ENCODE measurements at regions of chr20 and their contacts with region 1.

Region 1: GRCh38 chr20:45318948-45319347 is 10.8 kb upstream of the MATN4 start:
- DNase-seq: no peak
- ATAC-seq: no peak
- H3K4me3 ChIP-seq: no peak overlapping the region
- H3K4me3 Mint-ChIP-seq: no peak overlapping the region
- H3K27ac ChIP-seq: no peak overlapping the region
- H3K27ac Mint-ChIP-seq: no peak overlapping the region
- H3K4me1 ChIP-seq: peaks cover 23% of the 10 kb centered on the region
- H3K4me1 Mint-ChIP-seq: peaks cover 0 to 6% of the 10 kb centered on the region in 2 donors
- H3K27me3 ChIP-seq: no peaks in the 10 kb centered on the region
- H3K27me3 Mint-ChIP-seq: peaks cover 29 to 33% of the 10 kb centered on the region in 2 donors
- CTCF ChIP-seq: no peak

Region 2: GRCh38 chr20:45450097-45450818 is 131.3 kb after region 1 on chr20:
- intact Hi-C with region 1: loop called (anchors 1 kb)
- DNase-seq: peak in 1 of 2 donors; percentile 71
- ATAC-seq: peak; percentile 53 to 66 (median 60)
- H3K4me3 ChIP-seq: no peak overlapping the region
- H3K4me3 Mint-ChIP-seq: no peak overlapping the region
- H3K27ac ChIP-seq: no peak overlapping the region
- H3K27ac Mint-ChIP-seq: no peak overlapping the region
- H3K4me1 ChIP-seq: peaks cover 4% of the 10 kb centered on the region
- H3K4me1 Mint-ChIP-seq: no peaks in the 10 kb centered on the region
- H3K27me3 ChIP-seq: no peaks in the 10 kb centered on the region
- H3K27me3 Mint-ChIP-seq: peaks cover 2 to 13% of the 10 kb centered on the region in 2 donors
- CTCF ChIP-seq: peak; percentile 77

Region 3: GRCh38 chr20:45771182-45771759 is 452.3 kb after region 1 on chr20:
- intact Hi-C with region 1: loop called (anchors 1 kb)
- DNase-seq: peak; percentile 78 to 91
- ATAC-seq: peak; percentile 91 to 94 (median 94)
- H3K4me3 ChIP-seq: no peak overlapping the region
- H3K4me3 Mint-ChIP-seq: no peak overlapping the region
- H3K27ac ChIP-seq: no peak overlapping the region
- H3K27ac Mint-ChIP-seq: no peak overlapping the region
- H3K4me1 ChIP-seq: no peaks in the 10 kb centered on the region
- H3K4me1 Mint-ChIP-seq: peaks cover 3 to 4% of the 10 kb centered on the region in 2 donors
- H3K27me3 ChIP-seq: no peaks in the 10 kb centered on the region
- H3K27me3 Mint-ChIP-seq: peaks cover 7 to 19% of the 10 kb centered on the region in 2 donors
- CTCF ChIP-seq: peak; percentile 94

Measured in natural killer cell (primary cell).